Endothelial cell of umbilical vein (primary cell): ENCODE measurements at regions of chr14 and their contacts with region 1.

Region 1: DNA sequence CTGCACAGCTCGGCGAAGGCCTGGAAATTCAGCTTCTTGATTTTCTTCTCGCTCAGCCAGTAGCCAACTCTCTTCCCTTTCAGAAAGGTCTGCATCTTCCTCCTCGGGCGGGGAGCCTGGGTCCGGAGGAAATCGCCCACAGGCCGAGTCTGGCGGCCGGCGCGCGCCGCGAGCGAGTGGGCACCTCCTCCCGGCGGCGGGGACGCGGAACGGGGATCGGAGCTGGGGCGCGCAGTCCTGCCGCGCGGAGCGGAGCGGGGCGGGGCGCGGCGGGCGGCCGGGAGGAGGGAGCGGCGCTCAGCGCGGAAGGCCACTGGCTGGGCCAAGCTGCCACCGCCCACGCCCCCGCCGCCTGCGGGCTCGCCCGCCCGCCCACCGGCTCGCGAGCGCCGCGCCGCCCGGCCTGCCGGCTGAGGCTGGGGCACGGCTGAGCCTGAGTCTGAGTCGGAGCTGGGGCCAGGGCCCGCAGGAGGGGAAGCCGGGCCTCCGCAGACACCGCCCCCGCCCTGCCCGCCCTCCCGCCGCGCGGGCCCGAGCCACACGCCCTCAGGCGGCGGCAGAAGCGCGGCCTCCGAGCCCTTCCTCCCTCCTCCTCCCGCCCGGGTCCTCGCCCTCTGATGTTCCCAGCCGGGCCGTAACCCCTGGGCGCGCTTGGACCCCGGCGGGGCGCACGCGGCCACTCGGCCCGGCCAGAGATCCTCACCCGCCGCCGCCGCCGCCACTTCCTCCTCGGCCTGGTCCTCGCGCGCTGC is 480 bp downstream of the ITPK1 start:
- DNase-seq: peak; percentile 83
- H3K4me3 ChIP-seq: peak overlapping the region; percentile 43 to 62 (median 59)
- H3K27ac ChIP-seq: no peak overlapping the region
- H3K4me1 ChIP-seq: peaks cover 12% of the 10 kb centered on the region
- H3K27me3 ChIP-seq: no peaks in the 10 kb centered on the region
- CTCF ChIP-seq: no peak
- POLR2A ChIP-seq: no peak

Region 2: DNA sequence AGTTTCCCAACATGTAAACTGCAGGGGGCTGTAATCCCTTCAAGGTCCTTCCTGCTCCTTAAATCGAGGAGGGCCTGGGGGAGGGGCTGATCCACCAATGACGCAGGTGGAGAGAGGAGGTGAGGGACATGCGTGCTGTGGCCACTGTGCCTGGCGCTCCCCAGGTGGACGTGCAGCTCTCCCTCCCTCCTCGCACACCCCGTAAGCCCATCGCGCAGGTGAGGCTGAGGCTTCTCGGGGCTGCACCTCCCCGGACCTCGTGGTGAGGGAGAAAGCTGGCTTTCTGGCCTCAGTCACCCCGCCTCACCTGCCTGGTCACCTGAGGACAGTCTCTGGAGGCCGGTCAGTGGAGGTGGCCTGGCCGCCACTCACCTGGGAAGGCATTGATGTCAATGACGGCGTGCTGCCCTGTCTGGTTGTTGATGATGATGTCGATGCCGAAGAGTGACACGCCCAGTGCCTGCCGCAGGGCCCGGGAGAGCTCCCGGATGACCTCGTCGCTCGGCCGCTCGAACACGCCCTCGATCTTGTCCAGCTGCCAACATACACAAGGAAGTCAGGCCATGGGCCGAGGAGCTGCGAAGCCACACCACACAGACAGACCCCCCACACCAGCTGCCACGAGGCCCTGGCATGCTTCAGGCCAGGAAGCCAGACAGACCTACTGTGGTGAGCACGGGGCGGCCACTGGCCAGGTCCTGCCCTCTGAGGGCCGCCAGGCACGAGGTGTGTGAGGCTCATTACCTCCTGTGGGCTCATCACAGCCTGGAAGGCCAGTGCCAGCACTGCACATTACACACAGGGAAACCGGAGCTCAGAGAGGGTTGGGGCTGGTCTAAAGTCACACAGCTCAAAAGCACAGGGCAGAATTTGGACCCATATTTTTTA is 169.0 kb before region 1 on chr14:
- CTCF ChIA-PET with region 1: interaction called, 38 read pairs
- POLR2A ChIA-PET with region 1: no interaction called
- dilution Hi-C with region 1: no loop called
- intact Hi-C with region 1: no loop called
- DNase-seq: peak; percentile 70
- H3K4me3 ChIP-seq: no peak overlapping the region
- H3K27ac ChIP-seq: no peak overlapping the region
- H3K4me1 ChIP-seq: peaks cover 5% of the 10 kb centered on the region
- H3K27me3 ChIP-seq: no peaks in the 10 kb centered on the region
- CTCF ChIP-seq: no peak
- POLR2A ChIP-seq: no peak

Region 3: DNA sequence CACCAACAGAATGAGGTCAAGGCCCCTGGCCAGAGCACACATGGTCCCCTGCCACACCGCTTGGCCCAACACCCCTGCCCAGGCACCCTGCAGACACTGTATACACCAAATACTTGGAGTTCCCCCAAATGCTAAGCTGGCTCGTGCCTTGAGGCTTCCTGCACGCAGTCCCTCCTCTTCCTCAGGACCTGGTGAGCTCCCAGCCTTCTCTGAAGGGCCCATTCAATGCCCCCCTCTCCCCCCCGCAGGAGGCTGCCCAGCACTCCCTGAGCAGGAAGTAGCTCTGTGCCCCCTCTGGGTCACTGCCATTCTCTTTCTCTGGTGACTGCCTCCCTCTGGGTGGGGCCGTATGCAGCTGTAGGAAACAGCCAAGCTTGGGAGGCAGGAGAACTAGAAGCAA is 74.8 kb before region 1 on chr14:
- CTCF ChIA-PET with region 1: interaction called, 12 read pairs
- POLR2A ChIA-PET with region 1: no interaction called
- dilution Hi-C with region 1: no loop called
- intact Hi-C with region 1: no loop called
- DNase-seq: no peak
- H3K4me3 ChIP-seq: no peak overlapping the region
- H3K27ac ChIP-seq: no peak overlapping the region
- H3K4me1 ChIP-seq: peaks cover 57% of the 10 kb centered on the region
- H3K27me3 ChIP-seq: no peaks in the 10 kb centered on the region
- CTCF ChIP-seq: no peak
- POLR2A ChIP-seq: no peak

Region 4: GRCh38 chr14:93137864-93138263 is 22.6 kb after region 1 on chr14:
- CTCF ChIA-PET with region 1: interaction called, 121 read pairs
- POLR2A ChIA-PET with region 1: no interaction called
- dilution Hi-C with region 1: no loop called
- intact Hi-C with region 1: loop called (anchors 1 kb)
- DNase-seq: no peak
- H3K4me3 ChIP-seq: no peak overlapping the region
- H3K27ac ChIP-seq: no peak overlapping the region
- H3K4me1 ChIP-seq: no peaks in the 10 kb centered on the region
- H3K27me3 ChIP-seq: no peaks in the 10 kb centered on the region
- CTCF ChIP-seq: no peak
- POLR2A ChIP-seq: no peak

Region 5: GRCh38 chr14:93219103-93219726 is 104.0 kb after region 1 on chr14:
- CTCF ChIA-PET with region 1: interaction called, 43 read pairs
- POLR2A ChIA-PET with region 1: no interaction called
- dilution Hi-C with region 1: no loop called
- intact Hi-C with region 1: loop called (anchors 1 kb)
- DNase-seq: peak; percentile 59
- H3K4me3 ChIP-seq: no peak overlapping the region
- H3K27ac ChIP-seq: no peak overlapping the region
- H3K4me1 ChIP-seq: no peaks in the 10 kb centered on the region
- H3K27me3 ChIP-seq: no peaks in the 10 kb centered on the region
- CTCF ChIP-seq: peak; percentile 45 to 68
- POLR2A ChIP-seq: no peak